ENCODE measurements at regions of chr14 and their contacts with region 1.

Region 1: DNA sequence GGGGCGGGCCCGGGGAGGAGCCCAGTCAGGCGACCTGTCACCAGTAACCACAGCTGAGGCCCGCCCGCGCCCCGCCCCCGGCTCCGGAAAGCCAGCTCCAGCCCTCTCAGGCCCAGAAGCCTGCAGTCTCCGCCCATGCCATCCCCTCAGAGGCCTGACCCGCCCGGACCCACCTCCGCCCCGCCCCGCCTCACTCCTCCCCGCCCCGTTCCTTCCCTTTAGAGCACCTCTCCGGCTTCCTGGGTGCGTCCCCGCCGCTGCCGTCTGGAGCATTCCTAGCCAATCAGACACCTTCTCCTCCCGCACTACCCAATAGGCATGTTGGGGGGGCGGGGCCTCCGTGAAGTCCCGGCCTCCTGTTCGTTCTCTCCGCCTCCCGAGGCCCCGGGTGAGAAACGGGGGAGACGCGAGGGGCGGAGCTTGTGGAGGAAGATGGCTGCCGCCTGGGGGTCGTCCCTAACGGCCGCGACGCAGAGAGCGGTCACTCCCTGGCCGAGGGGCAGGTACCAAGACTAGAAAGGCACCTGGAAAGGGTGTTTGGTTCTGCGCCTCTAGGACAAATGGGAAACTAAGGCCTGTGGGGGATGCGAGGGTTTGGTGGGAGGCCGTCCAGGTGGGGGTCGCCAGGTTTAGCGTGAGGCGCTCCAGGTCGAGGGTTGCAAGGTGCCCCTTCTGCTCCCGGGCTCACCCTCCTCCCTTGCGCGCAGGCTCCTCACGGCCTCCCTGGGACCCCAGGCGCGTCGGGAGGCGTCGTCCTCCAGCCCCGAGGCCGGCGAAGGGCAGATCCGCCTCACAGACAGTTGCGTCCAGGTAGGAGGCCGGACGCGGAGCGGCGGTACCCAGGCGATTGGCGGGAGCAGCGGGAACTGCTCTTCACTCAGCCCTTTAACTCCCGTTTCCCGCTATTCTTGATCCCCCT is at the start of gene ISCA2:
- DNase-seq: peak; percentile 99
- H3K4me3 ChIP-seq: peak within 1 kb of the TSS; percentile 89
- H3K27ac ChIP-seq: peak within 1 kb of the TSS; percentile 36
- H3K4me1 ChIP-seq: peaks cover 43% of the 10 kb centered on the region
- CTCF ChIP-seq: no peak
- total RNA-seq, gene ISCA2: 19.6 and 38.4 TPM in 2 replicates

Region 2: GRCh38 chr14:73503648-73504047 is 990.0 kb before region 1 on chr14:
- CTCF ChIA-PET with region 1: no interaction called
- POLR2A ChIA-PET with region 1: no interaction called
- intact Hi-C with region 1: no loop called
- DNase-seq: peak; percentile 25
- H3K4me3 ChIP-seq: no peak overlapping the region
- H3K27ac ChIP-seq: no peak overlapping the region
- H3K4me1 ChIP-seq: no peaks in the 10 kb centered on the region
- CTCF ChIP-seq: no peak

Region 3: GRCh38 chr14:74161526-74162158 is 332.0 kb before region 1 on chr14:
- CTCF ChIA-PET with region 1: no interaction called
- POLR2A ChIA-PET with region 1: no interaction called
- intact Hi-C with region 1: no loop called
- DNase-seq: no peak
- H3K4me3 ChIP-seq: no peak overlapping the region
- H3K27ac ChIP-seq: no peak overlapping the region
- H3K4me1 ChIP-seq: no peaks in the 10 kb centered on the region
- CTCF ChIP-seq: no peak

Region 4: GRCh38 chr14:74257078-74257989 is 236.3 kb before region 1 on chr14:
- CTCF ChIA-PET with region 1: no interaction called
- POLR2A ChIA-PET with region 1: no interaction called
- intact Hi-C with region 1: no loop called
- DNase-seq: peak; percentile 71
- H3K4me3 ChIP-seq: peak overlapping the region; percentile 65
- H3K27ac ChIP-seq: no peak overlapping the region
- H3K4me1 ChIP-seq: peaks cover 10% of the 10 kb centered on the region
- CTCF ChIP-seq: peak; percentile 83

Region 5: GRCh38 chr14:74324931-74325361 is 168.7 kb before region 1 on chr14:
- CTCF ChIA-PET with region 1: interaction called, 3 read pairs
- POLR2A ChIA-PET with region 1: no interaction called
- intact Hi-C with region 1: loop called (anchors 10 kb)
- DNase-seq: peak; percentile 48
- H3K4me3 ChIP-seq: no peak overlapping the region
- H3K27ac ChIP-seq: no peak overlapping the region
- H3K4me1 ChIP-seq: no peaks in the 10 kb centered on the region
- CTCF ChIP-seq: peak; percentile 85

Region 6: DNA sequence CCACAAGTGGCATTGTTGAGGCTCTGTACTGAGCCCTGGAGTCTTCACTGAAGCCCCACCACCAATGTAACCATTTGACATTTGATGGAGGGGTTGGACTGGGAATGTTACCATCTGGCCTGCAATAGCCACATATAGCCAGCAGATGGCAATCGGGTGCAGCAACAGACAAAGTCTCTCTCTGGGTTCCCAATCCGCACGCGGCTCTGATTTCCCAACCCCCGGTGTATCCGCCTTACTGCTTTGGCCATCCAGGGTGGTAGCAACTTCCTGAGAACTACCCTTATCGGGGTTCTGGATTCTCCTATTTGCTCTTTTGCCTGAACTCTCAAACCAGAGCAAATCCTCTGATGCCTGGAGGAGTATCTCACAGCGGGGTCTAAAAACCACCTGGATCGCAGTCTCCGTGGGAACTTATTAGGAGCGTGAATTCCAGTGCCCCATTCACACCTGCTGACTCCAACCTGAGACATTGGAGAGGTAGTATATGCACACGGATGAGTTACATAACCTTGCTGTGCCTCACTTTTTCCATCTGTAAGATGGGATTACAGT is 131.2 kb before region 1 on chr14:
- CTCF ChIA-PET with region 1: interaction called, 5 read pairs
- POLR2A ChIA-PET with region 1: interaction called, 3 read pairs
- intact Hi-C with region 1: loop called (anchors 1 kb)
- DNase-seq: peak; percentile 60
- H3K4me3 ChIP-seq: no peak overlapping the region
- H3K27ac ChIP-seq: no peak overlapping the region
- H3K4me1 ChIP-seq: no peaks in the 10 kb centered on the region
- CTCF ChIP-seq: peak; percentile 98

Region 7: GRCh38 chr14:74641601-74642391 is 148.2 kb after region 1 on chr14:
- CTCF ChIA-PET with region 1: no interaction called
- POLR2A ChIA-PET with region 1: no interaction called
- intact Hi-C with region 1: no loop called
- DNase-seq: no peak
- H3K4me3 ChIP-seq: no peak overlapping the region
- H3K27ac ChIP-seq: no peak overlapping the region
- H3K4me1 ChIP-seq: no peaks in the 10 kb centered on the region
- CTCF ChIP-seq: no peak

Measured in OCI-LY7 (cell line).